ENCODE measurements at regions of chr3 and their contacts with region 1.

Region 1: DNA sequence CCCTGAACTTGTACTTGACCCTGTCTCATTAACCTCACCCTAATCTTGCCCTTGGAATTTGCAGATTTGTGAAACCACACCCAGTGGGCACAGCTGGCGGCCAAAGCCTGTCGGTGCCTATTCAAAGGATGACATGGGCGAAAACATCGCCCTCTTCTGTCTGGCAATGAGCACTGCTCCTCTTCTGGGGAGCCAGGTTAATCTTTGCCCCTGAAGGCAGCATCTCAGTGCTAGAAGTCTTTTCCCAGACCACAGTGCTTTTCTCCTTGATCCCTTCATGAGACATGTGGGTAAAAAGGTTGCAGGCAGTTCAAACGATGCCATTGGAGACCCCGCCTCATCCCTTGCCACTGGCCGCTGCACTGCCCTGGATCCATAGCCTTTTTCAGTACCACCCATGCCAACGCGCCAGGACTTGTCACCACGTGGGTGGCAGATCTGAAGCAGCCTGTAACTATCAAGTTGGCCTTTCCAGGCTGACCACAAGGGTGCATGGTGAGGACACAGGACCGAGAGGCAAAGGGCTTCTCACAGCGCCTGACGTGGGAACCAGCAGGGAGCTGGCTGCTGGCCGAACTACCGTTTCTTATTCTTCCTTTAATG is 6.5 kb upstream of the DNASE1L3 start:
- DNase-seq: no peak
- H3K4me3 ChIP-seq: no peak overlapping the region
- CTCF ChIP-seq: peak; percentile 76

Region 2: DNA sequence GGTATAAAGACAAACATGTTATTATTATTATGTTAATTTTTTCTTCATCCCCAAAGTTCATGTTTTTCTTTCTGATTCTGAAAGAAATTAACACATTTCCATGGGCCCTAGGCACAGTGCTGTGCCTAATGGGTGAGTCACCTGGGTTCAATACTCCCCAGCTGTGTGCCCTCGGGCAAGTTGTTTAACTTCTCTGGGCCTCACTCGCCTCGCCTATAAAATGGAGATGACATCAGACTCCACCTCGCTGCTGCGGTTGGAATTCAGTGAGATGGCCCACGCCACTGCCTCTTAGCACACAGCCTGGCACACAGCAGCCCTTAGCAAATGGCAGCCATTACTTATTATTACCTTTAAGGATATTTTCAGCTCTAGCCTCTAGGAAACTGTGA is 29.1 kb before region 1 on chr3:
- CTCF ChIA-PET with region 1: interaction called, 196 read pairs
- POLR2A ChIA-PET with region 1: no interaction called
- DNase-seq: no peak
- H3K4me3 ChIP-seq: no peak overlapping the region
- CTCF ChIP-seq: no peak

Region 3: DNA sequence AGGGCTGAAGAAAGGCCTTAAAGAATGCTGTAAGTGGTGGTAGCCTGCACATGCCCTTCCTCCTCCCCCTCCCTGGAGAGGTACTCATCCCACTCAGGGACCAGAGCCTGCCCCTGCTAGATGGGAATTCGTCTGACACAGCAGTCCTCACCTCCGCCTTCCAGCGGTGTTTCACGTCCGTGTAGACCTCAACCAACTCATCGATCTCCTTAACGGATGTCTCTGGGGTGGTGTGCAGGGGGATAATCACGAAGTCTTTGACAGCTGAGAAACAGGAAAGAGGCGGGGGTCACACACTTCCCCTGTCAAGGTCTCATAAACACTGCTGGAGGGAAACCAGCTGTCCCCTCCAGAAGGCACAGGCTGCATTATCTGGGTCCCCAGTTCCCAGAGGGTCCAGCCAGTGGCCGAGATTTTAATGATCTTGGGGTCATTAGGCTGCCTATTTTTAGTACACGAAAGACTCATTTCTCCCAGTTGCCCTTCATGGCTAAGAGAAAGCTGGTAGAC is 16.4 kb before region 1 on chr3:
- CTCF ChIA-PET with region 1: interaction called, 49 read pairs
- POLR2A ChIA-PET with region 1: interaction called, 3 read pairs
- DNase-seq: no peak
- H3K4me3 ChIP-seq: no peak overlapping the region
- CTCF ChIP-seq: no peak

Region 4: GRCh38 chr3:58206406-58207011 is 10.8 kb before region 1 on chr3:
- CTCF ChIA-PET with region 1: interaction called, 49 read pairs
- POLR2A ChIA-PET with region 1: no interaction called
- DNase-seq: no peak
- H3K4me3 ChIP-seq: no peak overlapping the region
- CTCF ChIP-seq: no peak

Region 5: DNA sequence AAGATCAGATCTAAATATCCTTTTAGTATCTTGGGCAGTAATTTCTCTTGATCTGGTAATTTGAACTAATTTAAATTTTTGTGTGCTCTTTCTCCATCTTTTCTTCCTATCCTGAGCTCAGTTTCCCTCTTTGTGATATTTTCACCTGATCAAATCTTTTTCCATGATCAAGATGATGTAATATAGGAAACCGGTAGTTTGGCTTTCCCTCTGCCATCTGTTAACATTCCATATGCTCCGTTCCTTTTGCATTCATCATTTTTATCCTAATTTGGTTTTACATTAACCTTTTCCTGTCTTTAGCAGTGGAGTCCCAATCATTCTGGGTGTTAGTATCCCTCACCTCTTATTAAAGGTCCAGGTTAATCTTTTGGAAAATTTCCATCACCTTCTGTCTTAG is 14.4 kb after region 1 on chr3:
- CTCF ChIA-PET with region 1: interaction called, 25 read pairs
- POLR2A ChIA-PET with region 1: no interaction called
- DNase-seq: no peak
- H3K4me3 ChIP-seq: no peak overlapping the region
- CTCF ChIP-seq: no peak

Region 6: DNA sequence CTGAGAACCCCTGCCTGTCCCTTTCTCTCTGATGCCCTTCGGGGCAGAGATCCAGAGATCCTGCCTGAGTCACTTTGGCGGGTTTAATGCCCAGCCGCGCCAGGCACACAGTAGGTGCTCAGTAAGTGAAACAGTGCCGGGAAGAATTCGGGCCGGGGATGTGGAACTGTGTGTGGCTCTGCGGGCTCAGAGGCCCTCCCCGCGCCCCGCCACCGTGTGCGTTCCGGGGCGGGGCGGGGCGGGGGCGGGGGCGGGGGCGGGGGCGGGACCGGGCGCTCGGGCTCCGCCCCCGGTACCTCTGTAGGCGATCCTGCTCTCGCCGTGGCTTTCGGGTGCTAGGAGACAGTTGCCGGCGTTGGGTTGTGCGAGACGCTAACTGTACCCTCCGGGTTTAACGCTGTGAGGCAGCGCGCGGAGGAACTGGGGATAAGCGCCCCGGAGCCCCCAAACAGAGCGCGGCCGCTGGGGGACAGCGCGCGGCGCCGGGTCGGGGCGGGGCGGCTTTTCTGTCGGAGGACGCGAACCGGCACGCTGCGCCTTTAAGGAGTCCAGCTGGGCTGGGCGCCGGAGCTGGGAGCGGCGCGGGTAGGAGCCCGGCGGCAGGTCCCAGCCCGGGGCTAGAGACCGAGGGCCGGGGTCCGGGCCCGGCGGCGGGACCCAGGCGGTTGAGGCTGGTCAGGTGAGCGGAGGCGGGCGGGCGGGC is 20.1 kb after region 1 on chr3 and contains the start of gene ABHD6:
- CTCF ChIA-PET with region 1: interaction called, 22 read pairs
- POLR2A ChIA-PET with region 1: no interaction called
- DNase-seq: no peak
- H3K4me3 ChIP-seq: peak within 1 kb of the TSS; percentile 81
- CTCF ChIP-seq: peak; percentile 33

Measured in AG04449 (cell line).